Psoas muscle (tissue), 8 donors: ENCODE measurements at regions of chr3 and their contacts with region 1.

Region 1: GRCh38 chr3:29280404-29281093 is at the start of gene RBMS3:
- DNase-seq: peak; percentile 85 to 92
- ATAC-seq: peak; percentile 78 to 82 (median 80)
- H3K4me3 ChIP-seq: peak within 1 kb of the TSS; percentile 76
- H3K27ac ChIP-seq: peak within 1 kb of the TSS; percentile 93
- H3K4me1 ChIP-seq: peaks cover 8% of the 10 kb centered on the region
- H3K27me3 ChIP-seq: no peaks in the 10 kb centered on the region
- CTCF ChIP-seq: peak; percentile 50
- total RNA-seq, gene RBMS3: 23.5 to 34.5 (median 29.7) TPM

Region 2: GRCh38 chr3:29153811-29154210 is 126.7 kb before region 1 on chr3:
- intact Hi-C with region 1: loop called in 1 of 2 experiments (anchors 5 kb)
- DNase-seq: no peak
- ATAC-seq: no peak
- H3K4me3 ChIP-seq: no peak overlapping the region
- H3K27ac ChIP-seq: no peak overlapping the region
- H3K4me1 ChIP-seq: peaks cover 5% of the 10 kb centered on the region
- H3K27me3 ChIP-seq: no peaks in the 10 kb centered on the region
- CTCF ChIP-seq: no peak

Region 3: GRCh38 chr3:29171043-29171990 is 109.2 kb before region 1 on chr3:
- intact Hi-C with region 1: no loop called
- DNase-seq: no peak
- ATAC-seq: no peak
- H3K4me3 ChIP-seq: no peak overlapping the region
- H3K27ac ChIP-seq: peak overlapping the region; percentile 18
- H3K4me1 ChIP-seq: peaks cover 4% of the 10 kb centered on the region
- H3K27me3 ChIP-seq: no peaks in the 10 kb centered on the region
- CTCF ChIP-seq: no peak

Region 4: DNA sequence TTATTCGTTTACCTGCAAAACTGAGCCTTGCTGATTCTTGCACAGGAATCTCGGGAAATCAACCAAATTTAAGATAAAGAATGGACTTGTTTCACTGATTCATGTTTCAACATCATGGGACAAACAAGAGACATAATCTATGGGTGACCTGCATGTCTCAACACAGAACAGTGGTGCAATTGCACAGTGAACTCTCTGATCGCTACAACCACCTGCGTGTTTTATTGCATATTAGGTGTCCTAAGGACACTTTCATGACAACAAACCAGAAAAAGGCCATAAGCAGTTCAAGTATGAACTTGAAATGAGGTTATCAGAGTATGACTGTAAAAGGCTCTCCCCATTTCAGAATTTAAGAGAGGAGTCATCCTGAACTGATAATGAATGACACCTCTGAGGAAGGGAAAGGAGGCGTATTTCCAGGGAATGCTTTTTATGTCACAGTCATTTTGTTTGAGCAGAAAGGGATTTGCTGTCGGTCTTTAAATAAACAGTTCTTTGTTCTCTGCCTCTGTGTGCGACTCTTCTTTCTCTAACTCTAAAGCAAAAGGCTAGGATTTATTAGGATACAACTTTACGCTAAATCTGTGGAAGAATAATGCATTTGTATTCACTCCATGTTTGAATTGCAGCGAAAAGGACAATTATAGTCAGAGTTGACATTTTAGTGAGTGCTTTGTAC is 167.5 kb after region 1 on chr3:
- intact Hi-C with region 1: loop called in 1 of 2 experiments (anchors 5 kb)
- DNase-seq: no peak
- ATAC-seq: no peak
- H3K4me3 ChIP-seq: no peak overlapping the region
- H3K27ac ChIP-seq: no peak overlapping the region
- H3K4me1 ChIP-seq: peaks cover 16% of the 10 kb centered on the region
- H3K27me3 ChIP-seq: no peaks in the 10 kb centered on the region
- CTCF ChIP-seq: no peak

Region 5: DNA sequence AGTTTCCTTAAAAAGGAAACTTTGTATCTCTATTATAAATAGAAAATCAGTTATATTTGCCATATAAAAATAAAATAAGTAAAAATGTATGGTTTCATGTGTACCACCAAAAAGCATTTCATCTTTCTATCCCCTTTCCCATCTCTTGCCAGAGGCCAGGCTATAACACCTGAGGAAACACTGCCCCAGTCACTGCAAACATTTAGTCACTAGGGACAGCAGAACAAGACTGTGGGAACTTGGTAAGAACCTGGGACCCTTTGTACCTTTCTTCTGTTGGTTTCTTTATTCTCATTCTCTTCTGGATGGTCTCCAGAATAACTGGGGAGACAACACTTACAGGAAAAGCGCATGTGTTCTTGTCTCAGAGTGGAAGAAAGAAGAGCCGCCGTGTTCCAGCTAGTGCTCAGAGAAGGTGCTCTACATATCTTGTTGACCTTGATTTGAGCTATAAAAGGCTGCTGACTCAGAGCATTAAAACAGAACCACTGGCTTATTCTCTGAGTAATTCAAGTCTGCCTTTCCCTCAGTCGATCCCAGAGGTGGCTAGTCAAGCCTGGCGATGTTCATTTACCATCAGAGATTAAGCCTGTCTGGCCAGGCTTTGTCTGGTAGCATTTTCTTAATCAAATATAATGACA is 362.0 kb after region 1 on chr3:
- intact Hi-C with region 1: loop called in 1 of 2 experiments (anchors 5 kb)
- DNase-seq: peak; percentile 19 to 58
- ATAC-seq: peak; percentile 94 to 98 (median 96)
- H3K4me3 ChIP-seq: peak overlapping the region; percentile 52
- H3K27ac ChIP-seq: peak overlapping the region; percentile 88
- H3K4me1 ChIP-seq: peaks cover 66% of the 10 kb centered on the region
- H3K27me3 ChIP-seq: no peaks in the 10 kb centered on the region
- CTCF ChIP-seq: no peak

Region 6: GRCh38 chr3:29764603-29765254 is 484.2 kb after region 1 on chr3:
- intact Hi-C with region 1: loop called (anchors 1 to 10 kb)
- DNase-seq: no peak
- ATAC-seq: peak in 2 of 4 donors; percentile 55 to 59
- H3K4me3 ChIP-seq: no peak overlapping the region
- H3K27ac ChIP-seq: no peak overlapping the region
- H3K4me1 ChIP-seq: peaks cover 18% of the 10 kb centered on the region
- H3K27me3 ChIP-seq: no peaks in the 10 kb centered on the region
- CTCF ChIP-seq: peak; percentile 61